Activated naive CD4-positive, alpha-beta T cell treated with anti-CD3 and anti-CD28 coated beads for 36 hours (primary cell): ENCODE measurements at regions of chr2 and their contacts with region 1.

Region 1: DNA sequence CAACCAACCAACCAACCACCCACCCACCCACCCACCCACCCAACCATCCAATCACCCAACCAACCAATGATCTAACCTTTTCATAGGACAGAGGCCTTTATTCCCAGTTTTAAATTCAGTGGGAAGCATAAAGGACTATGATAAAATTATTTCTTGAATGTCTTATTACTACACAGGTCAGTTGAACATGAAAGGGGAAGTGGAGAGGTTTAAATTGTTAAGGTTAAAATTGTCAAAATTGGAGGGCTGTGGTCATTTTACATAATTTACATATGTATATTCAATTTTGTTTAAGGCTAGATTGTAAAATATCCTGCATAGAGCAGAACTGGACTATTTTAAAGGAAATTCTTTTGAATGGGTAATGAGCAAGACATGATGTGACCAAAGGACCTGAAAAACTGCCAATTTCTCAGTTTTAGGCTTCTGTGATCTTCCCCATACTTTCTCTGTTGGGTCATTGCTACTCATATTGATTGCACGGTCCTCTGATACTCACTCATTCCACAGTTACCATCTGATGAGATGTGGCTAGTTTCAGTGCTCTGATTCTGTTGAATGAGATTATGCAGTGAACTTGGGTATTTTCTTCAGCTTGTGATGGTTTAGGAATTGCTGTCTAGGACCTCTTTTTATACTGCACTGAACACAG is 127.4 kb downstream of the PLCL1 start:
- DNase-seq: no peak
- H3K4me3 Mint-ChIP-seq: no peak overlapping the region
- H3K27ac Mint-ChIP-seq: no peak overlapping the region
- H3K4me1 Mint-ChIP-seq: peaks cover 59% of the 10 kb centered on the region
- H3K27me3 Mint-ChIP-seq: no peaks in the 10 kb centered on the region

Region 2: DNA sequence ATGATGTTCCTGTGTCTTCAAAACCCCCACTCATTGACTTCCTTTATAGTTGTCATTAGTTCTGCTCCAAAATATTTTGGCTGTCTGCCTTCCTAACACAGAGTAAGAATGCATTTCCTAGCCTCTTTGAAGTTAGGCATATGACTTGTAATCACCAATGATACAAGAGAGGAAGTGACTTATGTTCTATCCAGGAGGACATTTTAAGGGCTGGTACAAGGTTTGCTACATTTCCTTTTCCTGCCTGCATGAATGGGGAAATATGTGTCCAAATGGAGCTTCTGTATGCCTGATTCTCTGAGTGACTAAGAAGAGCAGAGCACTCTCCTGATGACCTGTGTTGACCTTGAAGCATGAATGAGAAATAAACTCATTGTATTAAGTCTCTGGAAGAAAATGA is 12.3 kb before region 1 on chr2:
- CTCF ChIA-PET with region 1: interaction called, 6 read pairs
- intact Hi-C with region 1: loop called (anchors 1 kb)
- DNase-seq: no peak
- H3K4me3 Mint-ChIP-seq: no peak overlapping the region
- H3K27ac Mint-ChIP-seq: no peak overlapping the region
- H3K4me1 Mint-ChIP-seq: peaks cover 38% of the 10 kb centered on the region
- H3K27me3 Mint-ChIP-seq: no peaks in the 10 kb centered on the region